ENCODE measurements at regions of chr16 and their contacts with region 1.

Region 1: DNA sequence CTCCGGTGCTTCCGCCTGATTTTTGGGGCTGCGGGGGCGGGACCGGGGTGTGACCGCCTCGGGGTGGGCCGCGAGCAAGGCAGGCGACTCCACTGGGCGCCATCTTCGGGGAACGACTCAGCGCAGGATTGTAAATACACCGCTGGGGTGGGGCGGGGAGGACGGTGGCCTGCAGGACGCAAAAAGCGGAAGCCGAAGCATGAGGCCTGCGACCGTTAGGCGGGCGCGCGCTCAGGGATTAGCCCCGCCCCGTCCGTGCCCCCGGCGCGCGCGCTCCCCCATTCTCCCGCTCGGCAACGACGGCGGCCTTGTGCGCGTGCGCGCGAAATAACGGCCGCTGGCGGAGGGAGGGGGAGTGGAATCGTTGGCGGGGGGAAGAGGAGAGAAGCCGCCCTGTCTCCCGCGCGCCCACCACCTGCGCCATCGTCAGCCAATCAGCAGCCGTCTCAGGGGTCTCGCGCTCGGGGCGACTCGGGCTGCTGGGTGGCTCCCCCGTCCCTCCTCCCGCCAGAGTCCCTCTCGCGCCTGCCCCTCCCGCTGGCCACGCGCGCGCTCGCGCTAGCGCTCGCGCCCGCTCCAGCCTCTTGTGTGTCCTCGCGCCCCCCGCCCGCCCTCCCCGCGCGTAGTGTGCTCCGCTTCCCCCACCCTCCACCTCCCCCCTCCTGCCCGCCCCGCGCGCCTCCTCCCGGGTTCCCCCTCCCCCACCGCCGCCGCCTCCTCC is 791 bp upstream of the MAZ start:
- DNase-seq: peak; percentile 97 to 99 (median 98)
- H3K4me3 ChIP-seq: peak overlapping the region; percentile 43 to 95
- H3K4me3 Mint-ChIP-seq: peak overlapping the region; percentile 99 to 100 (median 100)
- H3K27ac ChIP-seq: peak overlapping the region; percentile 86
- H3K27ac Mint-ChIP-seq: peak overlapping the region; percentile 98 to 100 (median 99)
- H3K4me1 ChIP-seq: peaks cover 46% of the 10 kb centered on the region
- H3K4me1 Mint-ChIP-seq: peaks cover 26 to 53% (median 37%) of the 10 kb centered on the region in 4 donors
- H3K27me3 ChIP-seq: no peaks in the 10 kb centered on the region
- H3K27me3 Mint-ChIP-seq: no peaks in the 10 kb centered on the region

Region 2: DNA sequence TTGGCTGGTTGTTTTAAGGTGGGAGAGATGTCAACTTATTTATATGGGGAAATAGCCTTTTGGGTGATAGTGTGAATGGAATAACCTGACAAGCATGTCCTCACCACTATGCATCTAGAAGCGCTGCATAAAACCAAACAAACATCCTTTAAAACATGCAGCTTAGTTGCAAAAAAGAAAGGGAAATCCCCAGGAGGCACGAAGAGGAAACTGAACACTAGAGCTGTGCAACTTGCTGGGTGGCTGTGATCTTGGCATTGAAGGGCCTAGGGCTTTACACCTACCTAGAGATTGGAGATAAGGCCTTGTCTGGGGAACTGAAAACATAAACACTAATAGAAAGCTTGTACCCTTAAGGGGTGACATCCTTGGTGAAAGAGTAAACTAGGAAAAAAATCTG is 67.0 kb before region 1 on chr16:
- CTCF ChIA-PET with region 1: interaction called, 7 read pairs
- POLR2A ChIA-PET with region 1: interaction called, 164 read pairs
- intact Hi-C with region 1: loop called (anchors 1 kb)
- DNase-seq: peak; percentile 80 to 87 (median 84)
- H3K4me3 ChIP-seq: no peak overlapping the region
- H3K4me3 Mint-ChIP-seq: peak overlapping the region; percentile 3 to 73 (median 68)
- H3K27ac ChIP-seq: peak overlapping the region; percentile 62
- H3K27ac Mint-ChIP-seq: peak overlapping the region; percentile 90 to 100 (median 94)
- H3K4me1 ChIP-seq: peaks cover 81% of the 10 kb centered on the region
- H3K4me1 Mint-ChIP-seq: peaks cover 63 to 91% (median 74%) of the 10 kb centered on the region in 4 donors
- H3K27me3 ChIP-seq: no peaks in the 10 kb centered on the region
- H3K27me3 Mint-ChIP-seq: no peaks in the 10 kb centered on the region

Region 3: GRCh38 chr16:29784901-29785500 is 20.5 kb before region 1 on chr16:
- CTCF ChIA-PET with region 1: interaction called, 53 read pairs
- POLR2A ChIA-PET with region 1: interaction called, 522 read pairs
- intact Hi-C with region 1: loop called (anchors 1 kb)
- DNase-seq: peak; percentile 70 to 77 (median 74)
- H3K4me3 ChIP-seq: peak overlapping the region in 1 of 2 donors; percentile 44
- H3K4me3 Mint-ChIP-seq: peak overlapping the region; percentile 57 to 86 (median 78)
- H3K27ac ChIP-seq: peak overlapping the region; percentile 47
- H3K27ac Mint-ChIP-seq: peak overlapping the region; percentile 33 to 92 (median 87)
- H3K4me1 ChIP-seq: peaks cover 25% of the 10 kb centered on the region
- H3K4me1 Mint-ChIP-seq: peaks cover 12 to 30% (median 24%) of the 10 kb centered on the region in 4 donors
- H3K27me3 ChIP-seq: no peaks in the 10 kb centered on the region
- H3K27me3 Mint-ChIP-seq: no peaks in the 10 kb centered on the region

Region 4: DNA sequence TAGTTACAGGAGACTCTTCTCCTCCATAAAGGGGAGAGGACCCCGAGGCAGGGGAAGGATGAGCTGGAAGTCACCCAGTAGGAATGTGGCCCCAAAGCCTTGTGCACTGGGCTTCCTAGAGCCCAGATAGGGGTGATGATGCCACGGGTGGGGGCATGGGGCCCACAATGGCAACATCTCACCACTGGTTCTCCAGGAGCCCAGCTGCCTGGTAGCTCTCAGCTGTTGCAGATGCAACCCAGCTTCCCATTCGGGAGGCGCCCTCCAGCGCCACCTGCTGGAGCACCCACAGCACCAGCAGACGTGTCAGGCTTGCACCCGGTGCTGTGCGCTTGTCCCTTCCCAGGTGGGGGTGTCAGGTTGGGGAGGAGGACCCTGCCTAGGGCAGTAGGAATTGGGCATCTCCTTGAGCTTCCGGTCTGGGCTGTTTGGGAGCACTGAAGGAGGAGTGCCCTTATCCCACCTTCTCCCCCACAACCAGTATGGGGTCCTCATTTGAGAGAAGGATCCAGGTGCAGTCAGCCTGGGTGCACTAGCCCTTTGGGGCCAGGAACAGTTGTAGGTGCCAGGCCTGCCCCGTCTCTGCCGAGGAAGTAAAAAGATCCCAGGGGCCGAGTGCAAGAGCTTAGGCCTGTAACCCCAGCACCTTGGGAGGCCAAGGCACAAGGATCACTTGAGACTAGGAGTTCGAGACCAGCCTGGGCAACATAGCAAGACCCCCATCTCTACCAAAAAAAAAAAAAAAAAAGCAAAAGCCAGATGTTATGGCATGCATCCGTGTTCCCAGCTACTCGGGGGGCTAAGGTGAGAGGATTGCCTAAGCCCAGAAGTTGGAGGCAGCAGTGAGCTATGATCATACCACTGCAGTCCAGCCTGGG is 43.1 kb after region 1 on chr16:
- CTCF ChIA-PET with region 1: interaction called, 84 read pairs
- POLR2A ChIA-PET with region 1: interaction called, 69 read pairs
- intact Hi-C with region 1: loop called (anchors 1 kb)
- DNase-seq: peak; percentile 79 to 83 (median 80)
- H3K4me3 ChIP-seq: no peak overlapping the region
- H3K4me3 Mint-ChIP-seq: no peak overlapping the region
- H3K27ac ChIP-seq: no peak overlapping the region
- H3K27ac Mint-ChIP-seq: peak overlapping the region; percentile 13 to 89 (median 60)
- H3K4me1 ChIP-seq: peaks cover 6% of the 10 kb centered on the region
- H3K4me1 Mint-ChIP-seq: peaks cover 1 to 7% (median 4%) of the 10 kb centered on the region in 4 donors
- H3K27me3 ChIP-seq: no peaks in the 10 kb centered on the region
- H3K27me3 Mint-ChIP-seq: no peaks in the 10 kb centered on the region

Region 5: DNA sequence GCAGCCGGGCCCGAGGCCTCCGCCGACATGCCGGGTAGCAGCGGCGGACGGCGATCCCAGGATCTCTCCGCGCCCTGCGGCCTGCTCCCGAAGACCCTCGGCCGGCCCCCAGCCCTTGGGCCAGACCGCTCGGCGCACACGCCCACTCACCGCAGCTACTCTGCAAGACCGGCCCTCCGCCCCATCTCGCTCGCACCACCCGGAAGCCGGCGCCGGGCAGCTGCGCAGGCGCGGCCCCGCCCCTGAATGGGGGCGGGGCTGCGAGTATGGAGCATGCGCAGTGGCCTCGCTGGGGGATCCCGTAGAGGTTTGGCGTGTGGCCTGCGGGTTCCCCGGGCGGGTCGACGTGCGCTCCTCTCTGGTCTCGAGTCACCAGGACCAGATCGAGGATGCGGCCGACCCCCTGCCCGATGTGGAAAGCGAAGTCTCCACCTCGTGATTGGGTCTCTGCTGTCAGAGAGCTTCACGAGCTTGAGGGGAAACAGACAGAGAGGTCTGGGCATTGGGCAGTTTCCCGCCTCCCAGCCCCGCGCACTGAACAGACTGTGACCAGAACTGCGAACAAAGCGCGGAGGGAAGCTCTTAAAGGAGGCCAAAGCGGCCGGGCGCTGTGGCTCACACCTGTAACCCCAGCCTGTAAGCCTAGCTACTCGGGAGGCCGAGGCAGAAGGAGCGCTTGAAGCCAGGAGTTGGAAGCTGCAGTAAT is 120.6 kb after region 1 on chr16 and contains the start of gene KCTD13:
- CTCF ChIA-PET with region 1: no interaction called
- POLR2A ChIA-PET with region 1: interaction called, 14 read pairs
- intact Hi-C with region 1: no loop called
- DNase-seq: peak; percentile 83 to 97 (median 90)
- H3K4me3 ChIP-seq: peak within 1 kb of the TSS; percentile 89 to 95
- H3K4me3 Mint-ChIP-seq: peak within 1 kb of the TSS; percentile 88 to 96 (median 94)
- H3K27ac ChIP-seq: peak within 1 kb of the TSS; percentile 77
- H3K27ac Mint-ChIP-seq: peak within 1 kb of the TSS; percentile 88 to 98 (median 97)
- H3K4me1 ChIP-seq: peaks cover 32% of the 10 kb centered on the region
- H3K4me1 Mint-ChIP-seq: peaks cover 22 to 53% (median 30%) of the 10 kb centered on the region in 4 donors
- H3K27me3 ChIP-seq: no peaks in the 10 kb centered on the region
- H3K27me3 Mint-ChIP-seq: no peaks in the 10 kb centered on the region
- total RNA-seq, gene KCTD13: 85.7 to 87.3 TPM

Region 6: GRCh38 chr16:30018731-30019158 is 213.2 kb after region 1 on chr16:
- CTCF ChIA-PET with region 1: interaction called, 4 read pairs
- POLR2A ChIA-PET with region 1: no interaction called
- intact Hi-C with region 1: loop called (anchors 1 kb)
- DNase-seq: no peak
- H3K4me3 ChIP-seq: no peak overlapping the region
- H3K4me3 Mint-ChIP-seq: peak overlapping the region in 2 of 8 donors; percentile 1 to 56
- H3K27ac ChIP-seq: no peak overlapping the region
- H3K27ac Mint-ChIP-seq: peak overlapping the region in 1 of 7 donors; percentile 28
- H3K4me1 ChIP-seq: peaks cover 9% of the 10 kb centered on the region
- H3K4me1 Mint-ChIP-seq: peaks cover 4 to 13% (median 7%) of the 10 kb centered on the region in 4 donors
- H3K27me3 ChIP-seq: no peaks in the 10 kb centered on the region
- H3K27me3 Mint-ChIP-seq: no peaks in the 10 kb centered on the region